Panc1 (cell line): ENCODE measurements at regions of chr9 and their contacts with region 1.

Region 1: GRCh38 chr9:104863180-104863883 is 64.6 kb downstream of the ABCA1 start:
- DNase-seq: peak; percentile 61
- ATAC-seq: peak; percentile 87
- H3K4me3 ChIP-seq: no peak overlapping the region
- H3K27ac ChIP-seq: no peak overlapping the region
- H3K4me1 ChIP-seq: no peaks in the 10 kb centered on the region
- H3K27me3 ChIP-seq: no peaks in the 10 kb centered on the region
- CTCF ChIP-seq: peak; percentile 79

Region 2: DNA sequence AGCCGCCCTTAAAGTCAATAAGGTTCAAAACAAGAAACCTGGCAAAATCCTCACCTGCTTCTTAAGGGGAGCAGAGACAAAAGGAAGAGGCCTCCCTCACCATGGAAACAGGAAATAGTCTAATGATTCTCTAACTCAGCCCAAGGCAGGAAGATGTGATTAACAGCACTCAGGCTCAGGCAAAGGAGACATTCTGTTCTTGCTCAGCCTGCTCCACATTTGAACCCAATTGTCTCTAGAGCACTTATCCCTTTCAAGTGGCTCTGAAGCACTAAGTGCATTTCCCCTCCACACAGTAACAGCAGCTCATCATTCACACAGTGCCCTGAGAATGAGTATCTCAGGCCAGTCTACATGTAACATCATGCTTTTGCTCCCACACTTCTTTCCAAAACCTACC is 27.1 kb before region 1 on chr9:
- CTCF ChIA-PET with region 1: no interaction called
- POLR2A ChIA-PET with region 1: no interaction called
- in situ Hi-C with region 1: no loop called
- intact Hi-C with region 1: no loop called
- DNase-seq: no peak
- ATAC-seq: no peak
- H3K4me3 ChIP-seq: no peak overlapping the region
- H3K27ac ChIP-seq: no peak overlapping the region
- H3K4me1 ChIP-seq: no peaks in the 10 kb centered on the region
- H3K27me3 ChIP-seq: no peaks in the 10 kb centered on the region
- CTCF ChIP-seq: no peak

Region 3: DNA sequence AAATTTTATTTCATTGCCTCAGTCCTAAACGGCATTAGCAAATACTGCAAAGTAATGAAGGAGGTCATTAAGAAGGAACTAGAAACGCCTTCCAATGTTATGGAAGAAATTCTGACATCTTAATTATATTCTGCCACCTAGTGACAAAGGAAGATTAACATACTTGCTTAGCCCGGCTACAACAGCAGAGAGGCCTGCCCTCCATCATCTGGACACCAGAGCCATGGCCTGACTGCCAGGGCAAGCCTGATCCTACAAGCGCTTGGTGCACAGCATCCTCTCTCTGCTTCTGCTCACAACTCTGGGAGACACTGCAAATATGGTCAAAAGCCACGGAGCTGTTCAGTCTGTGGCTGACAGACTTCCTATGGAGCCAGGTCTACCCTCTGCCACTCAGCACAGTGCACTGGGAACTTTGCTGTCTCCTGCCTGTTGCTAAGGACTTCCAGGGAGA is 293.8 kb after region 1 on chr9:
- CTCF ChIA-PET with region 1: no interaction called
- POLR2A ChIA-PET with region 1: no interaction called
- in situ Hi-C with region 1: no loop called
- intact Hi-C with region 1: loop called (anchors 5 kb)
- DNase-seq: no peak
- ATAC-seq: peak; percentile 91
- H3K4me3 ChIP-seq: no peak overlapping the region
- H3K27ac ChIP-seq: no peak overlapping the region
- H3K4me1 ChIP-seq: no peaks in the 10 kb centered on the region
- H3K27me3 ChIP-seq: no peaks in the 10 kb centered on the region
- CTCF ChIP-seq: peak; percentile 53

Region 4: DNA sequence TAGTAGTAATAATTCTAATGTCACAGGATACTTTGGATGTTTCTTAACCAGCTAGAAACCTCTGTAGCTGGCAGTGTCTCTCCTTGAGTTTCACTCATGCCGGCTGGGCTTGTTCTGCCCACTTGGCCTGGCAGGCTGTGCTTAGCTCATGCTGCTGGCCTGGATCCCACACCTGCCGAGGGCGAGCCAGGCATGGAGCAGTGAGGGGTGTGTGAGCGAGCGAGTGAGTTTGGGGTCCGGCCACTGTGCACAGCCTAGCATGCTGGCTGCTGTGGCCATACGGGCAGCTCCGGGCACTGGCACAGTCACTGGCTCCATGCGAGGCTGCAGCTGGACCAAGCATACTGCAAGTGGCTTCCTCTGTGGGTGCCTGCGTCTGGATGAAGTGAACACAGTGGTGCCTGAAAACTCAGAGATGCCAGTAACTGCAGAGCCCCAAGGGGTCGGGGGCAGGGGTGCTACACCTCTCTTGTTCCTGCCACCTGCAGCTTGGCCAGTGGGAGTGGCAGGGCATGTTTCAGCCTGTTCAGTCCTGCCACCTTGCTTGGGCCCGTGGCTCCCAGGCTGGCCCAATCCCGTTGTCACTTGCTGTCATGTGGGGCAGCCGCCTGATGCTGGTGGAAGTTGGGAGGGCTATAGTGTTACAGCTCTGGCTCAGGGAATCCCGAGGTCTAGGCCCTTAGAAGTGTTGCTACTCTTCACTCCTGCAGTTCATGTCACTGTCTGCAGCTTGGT is 594.4 kb after region 1 on chr9:
- CTCF ChIA-PET with region 1: interaction called, 13 read pairs
- POLR2A ChIA-PET with region 1: no interaction called
- in situ Hi-C with region 1: no loop called
- intact Hi-C with region 1: no loop called
- DNase-seq: no peak
- ATAC-seq: no peak
- H3K4me3 ChIP-seq: no peak overlapping the region
- H3K27ac ChIP-seq: no peak overlapping the region
- H3K4me1 ChIP-seq: no peaks in the 10 kb centered on the region
- H3K27me3 ChIP-seq: no peaks in the 10 kb centered on the region
- CTCF ChIP-seq: no peak